ENCODE measurements at regions of chr9 and their contacts with region 1.

Region 1: GRCh38 chr9:13857521-13857920 is 456.4 kb downstream of the NFIB start:
- DNase-seq: no peak
- H3K4me3 ChIP-seq: no peak overlapping the region
- H3K27ac ChIP-seq: no peak overlapping the region
- H3K4me1 ChIP-seq: peaks cover 0 to under 1% of the 10 kb centered on the region in 2 donors
- H3K27me3 ChIP-seq: no peaks in the 10 kb centered on the region
- CTCF ChIP-seq: no peak

Region 2: DNA sequence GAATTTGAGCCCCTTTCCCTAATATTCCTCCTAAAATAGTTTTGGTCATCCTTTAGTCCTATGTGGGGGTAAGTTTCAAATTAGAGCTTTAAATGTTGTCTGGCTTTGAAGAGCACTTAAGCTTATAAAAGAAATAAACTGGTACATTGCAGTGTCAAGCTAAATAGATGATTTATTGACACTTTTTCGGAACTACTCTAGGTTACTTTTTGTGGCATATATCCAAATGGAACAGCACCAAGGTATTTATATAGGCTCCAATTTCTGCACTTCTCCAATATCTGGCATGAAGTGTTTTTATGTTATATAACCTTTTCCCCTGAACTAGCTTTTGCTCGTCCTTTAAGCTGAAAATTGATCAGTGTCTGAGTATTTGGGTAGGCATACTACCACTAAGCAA is 54.0 kb after region 1 on chr9:
- intact Hi-C with region 1: loop called (anchors 5 kb)
- DNase-seq: no peak
- H3K4me3 ChIP-seq: no peak overlapping the region
- H3K27ac ChIP-seq: no peak overlapping the region
- H3K4me1 ChIP-seq: peaks cover 0 to 6% of the 10 kb centered on the region in 2 donors
- H3K27me3 ChIP-seq: no peaks in the 10 kb centered on the region
- CTCF ChIP-seq: no peak

Measured in ascending aorta (tissue), 2 donors.